CD4-positive, alpha-beta T cell (primary cell): ENCODE measurements at regions of chr18 and their contacts with region 1.

Region 1: GRCh38 chr18:47150029-47150823 is at the start of gene HDHD2:
- DNase-seq: peak; percentile 43 to 84 (median 72)
- ATAC-seq: peak; percentile 75
- H3K4me3 ChIP-seq: peak within 1 kb of the TSS; percentile 80
- H3K4me3 Mint-ChIP-seq: peak within 1 kb of the TSS; percentile 98
- H3K27ac ChIP-seq: peak within 1 kb of the TSS; percentile 74 to 76
- H3K27ac Mint-ChIP-seq: peak within 1 kb of the TSS; percentile 95
- H3K4me1 ChIP-seq: peaks cover 25% of the 10 kb centered on the region
- H3K4me1 Mint-ChIP-seq: peaks cover 63% of the 10 kb centered on the region
- H3K27me3 ChIP-seq: no peaks in the 10 kb centered on the region
- H3K27me3 Mint-ChIP-seq: no peaks in the 10 kb centered on the region
- CTCF ChIP-seq: no peak
- total RNA-seq, gene HDHD2: 7.3 to 8.9 TPM

Region 2: DNA sequence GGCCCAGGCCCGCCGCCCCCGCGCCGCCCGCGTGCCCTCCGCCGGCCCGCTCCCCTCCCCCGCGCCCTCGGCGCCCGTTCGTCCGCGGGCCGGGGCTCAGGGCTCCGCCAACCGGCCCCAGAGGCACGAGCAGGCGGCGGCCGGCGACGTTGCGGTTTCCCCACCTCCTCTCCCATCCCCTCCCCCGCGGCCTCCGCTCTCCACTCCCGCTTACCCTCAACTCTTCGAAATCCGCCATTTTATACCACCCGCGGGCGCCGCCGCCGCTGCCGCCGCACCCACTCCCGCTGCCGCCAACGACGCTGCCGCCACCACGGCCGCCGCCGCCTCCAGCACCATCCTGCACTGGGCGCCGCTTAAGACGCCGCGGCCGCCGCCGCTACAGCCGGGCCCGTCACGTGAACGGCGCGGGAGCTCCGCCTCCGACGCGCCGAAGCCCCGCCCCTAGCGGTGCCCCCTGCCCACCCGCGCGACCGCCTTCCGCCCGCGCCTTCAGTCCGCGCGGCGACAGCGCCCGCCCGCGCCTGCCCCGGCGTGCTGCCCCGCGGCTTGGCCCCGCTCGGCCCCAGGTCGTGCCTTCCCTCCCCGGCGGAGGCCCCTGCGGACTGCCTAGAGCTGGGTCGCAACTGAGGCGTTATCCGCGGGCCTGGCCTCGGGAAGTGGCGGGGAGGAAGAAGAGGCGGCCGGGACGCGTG is 233.0 kb before region 1 on chr18 and contains the starts of genes KATNAL2 and PIAS2:
- CTCF ChIA-PET with region 1: no interaction called
- POLR2A ChIA-PET with region 1: interaction called, 19 read pairs
- intact Hi-C with region 1: loop called in 1 of 2 experiments (anchors 10 kb)
- DNase-seq: peak; percentile 55 to 90 (median 70)
- ATAC-seq: peak; percentile 86
- H3K4me3 ChIP-seq: peak within 1 kb of the TSS; percentile 82
- H3K4me3 Mint-ChIP-seq: peak within 1 kb of the TSS; percentile 97
- H3K27ac ChIP-seq: peak within 1 kb of the TSS in 1 of 2 donors; percentile 56
- H3K27ac Mint-ChIP-seq: peak within 1 kb of the TSS; percentile 92
- H3K4me1 ChIP-seq: peaks cover 23% of the 10 kb centered on the region
- H3K4me1 Mint-ChIP-seq: peaks cover 55% of the 10 kb centered on the region
- H3K27me3 ChIP-seq: no peaks in the 10 kb centered on the region
- H3K27me3 Mint-ChIP-seq: no peaks in the 10 kb centered on the region
- CTCF ChIP-seq: no peak
- total RNA-seq, gene KATNAL2: 1.5 to 2.0 TPM
- total RNA-seq, gene PIAS2: 32.0 to 36.3 TPM

Region 3: GRCh38 chr18:46946656-46947282 is 203.5 kb before region 1 on chr18:
- CTCF ChIA-PET with region 1: no interaction called
- POLR2A ChIA-PET with region 1: no interaction called
- intact Hi-C with region 1: no loop called
- DNase-seq: peak; percentile 5 to 65 (median 26)
- ATAC-seq: peak; percentile 82
- H3K4me3 ChIP-seq: peak overlapping the region; percentile 62
- H3K4me3 Mint-ChIP-seq: no peak overlapping the region
- H3K27ac ChIP-seq: no peak overlapping the region
- H3K27ac Mint-ChIP-seq: no peak overlapping the region
- H3K4me1 ChIP-seq: peaks cover 5% of the 10 kb centered on the region
- H3K4me1 Mint-ChIP-seq: no peaks in the 10 kb centered on the region
- H3K27me3 ChIP-seq: peaks cover 2 to 14% of the 10 kb centered on the region in 2 experiments
- H3K27me3 Mint-ChIP-seq: peaks cover 28% of the 10 kb centered on the region
- CTCF ChIP-seq: no peak

Region 4: GRCh38 chr18:47040982-47041381 is 109.2 kb before region 1 on chr18:
- CTCF ChIA-PET with region 1: no interaction called
- POLR2A ChIA-PET with region 1: no interaction called
- intact Hi-C with region 1: no loop called
- DNase-seq: no peak
- ATAC-seq: no peak
- H3K4me3 ChIP-seq: no peak overlapping the region
- H3K4me3 Mint-ChIP-seq: no peak overlapping the region
- H3K27ac ChIP-seq: no peak overlapping the region
- H3K27ac Mint-ChIP-seq: no peak overlapping the region
- H3K4me1 ChIP-seq: no peaks in the 10 kb centered on the region
- H3K4me1 Mint-ChIP-seq: no peaks in the 10 kb centered on the region
- H3K27me3 ChIP-seq: no peaks in the 10 kb centered on the region
- H3K27me3 Mint-ChIP-seq: peaks cover 8% of the 10 kb centered on the region
- CTCF ChIP-seq: no peak